ENCODE measurements at regions of chr18 and their contacts with region 1.

Region 1: GRCh38 chr18:68985172-68985820 is 187.4 kb downstream of the CCDC102B start:
- DNase-seq: no peak
- ATAC-seq: no peak
- H3K4me3 ChIP-seq: no peak overlapping the region
- H3K27ac ChIP-seq: no peak overlapping the region
- H3K4me1 ChIP-seq: no peaks in the 10 kb centered on the region
- H3K27me3 ChIP-seq: no peaks in the 10 kb centered on the region
- CTCF ChIP-seq: no peak
- POLR2A ChIP-seq: no peak
- RAD21 ChIP-seq: no peak

Region 2: GRCh38 chr18:69747388-69747787 is 762.1 kb after region 1 on chr18:
- CTCF ChIA-PET with region 1: no interaction called
- POLR2A ChIA-PET with region 1: no interaction called
- dilution Hi-C with region 1: no loop called
- in situ Hi-C with region 1: no loop called
- intact Hi-C with region 1: no loop called
- DNase-seq: no peak
- ATAC-seq: no peak
- H3K4me3 ChIP-seq: no peak overlapping the region
- H3K27ac ChIP-seq: no peak overlapping the region
- H3K4me1 ChIP-seq: no peaks in the 10 kb centered on the region
- H3K27me3 ChIP-seq: no peaks in the 10 kb centered on the region
- CTCF ChIP-seq: no peak
- POLR2A ChIP-seq: no peak
- RAD21 ChIP-seq: no peak

Region 3: GRCh38 chr18:70469916-70470315 is 1484.6 kb after region 1 on chr18:
- CTCF ChIA-PET with region 1: no interaction called
- POLR2A ChIA-PET with region 1: no interaction called
- dilution Hi-C with region 1: no loop called
- in situ Hi-C with region 1: no loop called
- intact Hi-C with region 1: loop called (anchors 10 kb)
- DNase-seq: no peak
- ATAC-seq: 0 out of 2 replicates have a peak, but pooled peaks have one; percentile 17
- H3K4me3 ChIP-seq: no peak overlapping the region
- H3K27ac ChIP-seq: no peak overlapping the region
- H3K4me1 ChIP-seq: no peaks in the 10 kb centered on the region
- H3K27me3 ChIP-seq: no peaks in the 10 kb centered on the region
- CTCF ChIP-seq: no peak
- POLR2A ChIP-seq: no peak
- RAD21 ChIP-seq: no peak